ENCODE measurements at regions of chr14 and their contacts with region 1.

Region 1: DNA sequence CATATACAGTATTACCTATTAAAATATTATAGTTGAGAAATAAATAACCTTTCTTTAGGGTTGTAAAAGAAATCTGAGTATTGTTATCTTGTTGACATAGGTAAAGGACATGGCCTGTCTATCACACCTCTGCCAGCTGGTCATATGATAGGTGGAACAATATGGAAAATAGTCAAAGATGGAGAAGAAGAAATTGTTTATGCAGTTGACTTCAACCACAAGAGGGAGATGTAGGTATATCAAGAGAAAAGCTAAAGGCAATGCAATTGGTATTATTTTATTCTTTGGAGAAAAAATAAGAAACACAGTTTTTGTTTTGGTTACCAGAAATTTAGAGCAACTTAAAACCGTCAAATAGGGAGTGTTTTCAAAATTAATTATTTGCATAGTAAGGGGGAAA is 13.5 kb downstream of the CPSF2 start:
- DNase-seq: no peak
- H3K4me3 Mint-ChIP-seq: no peak overlapping the region
- H3K27ac Mint-ChIP-seq: no peak overlapping the region
- H3K4me1 Mint-ChIP-seq: no peaks in the 10 kb centered on the region
- H3K27me3 Mint-ChIP-seq: no peaks in the 10 kb centered on the region
- CTCF ChIP-seq: no peak

Region 2: GRCh38 chr14:92456215-92457015 is 321.1 kb after region 1 on chr14:
- CTCF ChIA-PET with region 1: no interaction called
- intact Hi-C with region 1: loop called (anchors 1 kb)
- DNase-seq: peak; percentile 60
- H3K4me3 Mint-ChIP-seq: no peak overlapping the region
- H3K27ac Mint-ChIP-seq: no peak overlapping the region
- H3K4me1 Mint-ChIP-seq: no peaks in the 10 kb centered on the region
- H3K27me3 Mint-ChIP-seq: no peaks in the 10 kb centered on the region
- CTCF ChIP-seq: peak; percentile 41

Region 3: DNA sequence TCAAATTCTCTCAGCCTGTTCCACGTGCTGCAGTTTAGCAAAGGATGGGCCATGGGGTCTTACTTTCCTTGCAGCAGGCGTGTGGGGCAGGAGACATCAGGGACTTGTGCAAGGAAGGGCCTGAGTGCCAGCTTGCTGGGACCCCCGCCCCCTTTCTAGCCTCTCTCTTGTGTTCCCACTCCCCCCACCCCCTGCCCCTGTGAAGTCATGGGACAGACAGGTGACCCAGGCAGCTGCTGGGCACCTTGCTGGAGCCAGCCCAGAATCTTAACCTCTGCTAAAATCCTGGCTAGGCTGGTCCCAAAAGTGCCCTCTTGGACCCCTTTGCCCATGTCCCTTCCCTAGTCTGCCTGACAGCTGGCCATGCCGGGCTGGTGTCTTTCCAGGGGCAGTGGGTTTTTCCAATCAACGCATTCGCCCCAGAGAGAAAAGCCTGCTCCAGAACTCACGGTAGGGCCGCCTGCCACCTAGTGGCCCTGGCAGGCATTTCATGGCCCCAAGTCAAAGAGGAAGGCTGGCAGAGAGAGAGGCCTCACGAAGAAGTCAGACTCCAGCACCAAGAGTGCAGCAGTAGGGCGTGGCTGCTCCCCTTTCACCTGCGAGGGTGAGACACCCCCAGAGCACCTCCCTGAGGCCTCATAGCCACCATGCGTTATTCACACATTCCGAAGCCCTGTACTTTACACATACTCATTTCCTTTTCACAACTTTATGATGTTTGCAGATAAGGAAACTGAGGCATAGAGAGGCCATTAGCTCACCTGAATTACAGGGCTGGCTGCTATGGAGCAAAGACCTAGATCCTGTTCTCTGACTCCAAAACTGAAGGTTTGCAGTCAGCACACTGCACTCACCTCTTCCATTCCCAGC is 545.7 kb after region 1 on chr14:
- CTCF ChIA-PET with region 1: no interaction called
- intact Hi-C with region 1: loop called (anchors 5 kb)
- DNase-seq: peak; percentile 81
- H3K4me3 Mint-ChIP-seq: no peak overlapping the region
- H3K27ac Mint-ChIP-seq: no peak overlapping the region
- H3K4me1 Mint-ChIP-seq: no peaks in the 10 kb centered on the region
- H3K27me3 Mint-ChIP-seq: no peaks in the 10 kb centered on the region
- CTCF ChIP-seq: peak; percentile 81

Measured in Calu3 (cell line).